MCF 10A (cell line): ENCODE measurements at regions of chr16 and their contacts with region 1.

Region 1: DNA sequence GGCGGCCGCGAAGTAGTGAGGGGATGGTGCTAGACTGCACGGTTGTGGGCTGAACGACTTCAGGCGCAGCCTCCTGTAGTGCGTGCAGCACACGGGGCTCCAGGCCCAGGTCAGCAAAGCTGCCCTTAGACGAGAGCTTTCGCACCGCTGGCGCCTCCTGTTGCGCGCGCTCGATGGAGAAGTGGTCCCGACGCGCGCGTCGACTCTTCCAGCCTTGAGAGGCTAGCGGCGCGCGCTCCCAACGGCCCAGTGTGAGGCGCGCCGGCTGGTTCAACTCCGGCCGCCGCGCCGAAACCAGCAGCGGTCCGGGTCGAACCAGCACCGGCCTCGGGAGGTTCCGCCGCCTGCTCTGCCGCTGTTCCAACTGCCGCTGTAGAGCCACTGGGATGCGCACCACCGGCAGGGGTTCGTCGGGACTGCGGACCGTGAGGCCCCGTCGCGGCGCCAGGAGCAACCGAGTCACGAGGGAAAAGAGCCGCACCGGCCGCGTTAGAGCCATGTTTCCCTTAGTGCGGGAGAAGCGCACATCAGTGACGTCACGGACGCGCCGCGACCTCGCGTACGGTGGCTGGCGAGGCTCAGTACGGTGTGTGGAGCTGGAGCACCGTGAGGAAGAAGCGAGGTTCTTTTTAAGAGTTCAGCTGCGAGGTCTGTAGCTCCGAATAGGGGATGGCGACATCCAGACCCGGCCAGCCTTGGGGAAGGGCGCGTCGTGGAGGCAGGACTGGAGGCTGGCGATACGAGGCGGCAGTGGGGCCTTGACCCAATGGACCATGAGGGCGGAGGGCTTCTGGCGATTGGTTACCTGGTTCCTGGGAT is at the starts of genes DDX28 and DUS2:
- DNase-seq: peak; percentile 89
- H3K4me3 Mint-ChIP-seq: peak within 1 kb of the TSS; percentile 94
- H3K27ac Mint-ChIP-seq: peak within 1 kb of the TSS; percentile 96
- H3K4me1 Mint-ChIP-seq: peaks cover 5% of the 10 kb centered on the region
- H3K27me3 Mint-ChIP-seq: no peaks in the 10 kb centered on the region
- CTCF ChIP-seq: no peak
- total RNA-seq, gene DDX28: 9.3 and 11.7 TPM in 2 replicates
- total RNA-seq, gene DUS2: 24.2 and 26.4 TPM in 2 replicates

Region 2: DNA sequence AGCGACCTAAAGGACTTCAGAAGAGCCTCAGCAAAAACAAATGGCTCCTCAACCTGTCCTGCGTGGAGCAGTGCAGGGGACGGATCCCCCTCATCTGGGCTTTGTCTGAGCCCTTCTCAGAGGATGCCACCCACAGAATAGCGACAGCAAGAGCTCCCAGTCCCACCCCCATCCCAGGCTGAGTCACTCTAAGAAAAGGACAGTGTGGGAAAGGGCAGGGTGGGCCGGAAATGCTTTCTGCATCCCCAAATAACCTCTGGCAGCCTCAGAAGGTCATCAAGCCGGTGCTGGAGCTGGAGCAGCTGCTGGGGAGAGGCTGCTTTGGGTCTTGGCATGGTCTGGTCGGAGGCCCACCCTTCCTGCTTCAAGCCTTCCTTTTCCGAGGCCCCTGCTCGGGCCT is 63.4 kb before region 1 on chr16:
- CTCF ChIA-PET with region 1: no interaction called
- POLR2A ChIA-PET with region 1: interaction called, 17 read pairs
- intact Hi-C with region 1: no loop called
- DNase-seq: peak; percentile 67
- H3K4me3 Mint-ChIP-seq: no peak overlapping the region
- H3K27ac Mint-ChIP-seq: no peak overlapping the region
- H3K4me1 Mint-ChIP-seq: peaks cover 41% of the 10 kb centered on the region
- H3K27me3 Mint-ChIP-seq: no peaks in the 10 kb centered on the region
- CTCF ChIP-seq: no peak

Region 3: GRCh38 chr16:67968400-67969253 is 54.3 kb before region 1 on chr16 and contains the start of gene SLC12A4:
- CTCF ChIA-PET with region 1: interaction called, 3 read pairs
- POLR2A ChIA-PET with region 1: interaction called, 17 read pairs
- intact Hi-C with region 1: no loop called
- DNase-seq: peak; percentile 72
- H3K4me3 Mint-ChIP-seq: peak within 1 kb of the TSS; percentile 82
- H3K27ac Mint-ChIP-seq: peak within 1 kb of the TSS; percentile 77
- H3K4me1 Mint-ChIP-seq: peaks cover 26% of the 10 kb centered on the region
- H3K27me3 Mint-ChIP-seq: no peaks in the 10 kb centered on the region
- CTCF ChIP-seq: no peak
- total RNA-seq, gene SLC12A4: 107 TPM in 2 replicates

Region 4: DNA sequence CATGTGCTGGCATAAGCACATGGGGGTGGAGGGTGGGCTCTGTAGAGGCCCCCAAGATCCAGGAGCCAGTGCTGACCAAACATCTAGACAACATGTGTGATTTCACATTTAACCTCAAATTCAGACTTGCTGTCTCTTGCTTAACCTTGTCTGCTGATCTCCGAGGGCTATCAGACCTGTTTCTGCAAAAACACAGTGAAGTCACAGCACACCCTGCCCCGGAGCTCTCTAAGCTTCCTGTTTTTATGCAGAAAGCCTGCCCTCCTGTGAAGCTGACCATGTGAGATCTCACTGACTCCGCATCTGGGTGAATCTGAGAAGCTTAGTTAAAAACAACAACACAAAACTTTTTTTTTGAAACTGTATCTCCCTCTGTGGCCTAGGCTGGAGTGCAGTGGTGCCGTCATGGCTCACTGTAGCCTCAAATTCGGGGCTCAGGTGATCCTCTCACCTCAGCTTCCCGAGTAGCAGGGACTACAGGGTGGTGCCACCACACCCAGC is 17.1 kb before region 1 on chr16:
- CTCF ChIA-PET with region 1: interaction called, 6 read pairs
- POLR2A ChIA-PET with region 1: interaction called, 31 read pairs
- intact Hi-C with region 1: no loop called
- DNase-seq: peak; percentile 30
- H3K4me3 Mint-ChIP-seq: no peak overlapping the region
- H3K27ac Mint-ChIP-seq: peak overlapping the region; percentile 59
- H3K4me1 Mint-ChIP-seq: peaks cover 10% of the 10 kb centered on the region
- H3K27me3 Mint-ChIP-seq: no peaks in the 10 kb centered on the region
- CTCF ChIP-seq: no peak